A673 (cell line): ENCODE measurements at regions of chr19 and their contacts with region 1.

Region 1: DNA sequence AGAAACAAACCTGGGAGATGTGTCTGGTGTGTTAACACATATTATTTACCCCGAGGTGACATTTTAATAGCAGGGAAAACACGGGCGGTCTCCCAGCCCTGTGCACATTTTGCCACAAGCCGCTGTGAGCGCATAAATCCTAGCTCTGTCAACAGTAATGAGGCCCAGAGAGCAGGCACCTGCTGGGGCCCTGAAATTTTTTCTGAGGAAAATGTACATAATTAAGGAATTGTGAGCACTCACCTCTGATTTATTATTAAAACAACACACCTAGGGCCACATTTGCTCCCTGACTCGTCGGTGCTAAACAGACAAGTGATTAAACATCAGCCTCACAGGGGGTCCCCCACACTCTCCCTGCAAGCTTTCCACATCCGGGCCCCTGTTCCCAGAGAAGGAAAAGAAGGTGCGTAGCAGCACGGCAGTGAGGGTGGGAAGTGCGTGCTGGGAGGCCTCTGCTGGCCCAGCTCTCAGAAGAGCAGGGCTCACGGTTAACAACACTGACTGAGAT is 616.3 kb downstream of the UQCRFS1 start:
- DNase-seq: no peak
- H3K4me3 ChIP-seq: no peak overlapping the region
- H3K27ac ChIP-seq: no peak overlapping the region
- H3K4me1 ChIP-seq: no peaks in the 10 kb centered on the region
- H3K27me3 ChIP-seq: no peaks in the 10 kb centered on the region
- CTCF ChIP-seq: no peak

Region 2: DNA sequence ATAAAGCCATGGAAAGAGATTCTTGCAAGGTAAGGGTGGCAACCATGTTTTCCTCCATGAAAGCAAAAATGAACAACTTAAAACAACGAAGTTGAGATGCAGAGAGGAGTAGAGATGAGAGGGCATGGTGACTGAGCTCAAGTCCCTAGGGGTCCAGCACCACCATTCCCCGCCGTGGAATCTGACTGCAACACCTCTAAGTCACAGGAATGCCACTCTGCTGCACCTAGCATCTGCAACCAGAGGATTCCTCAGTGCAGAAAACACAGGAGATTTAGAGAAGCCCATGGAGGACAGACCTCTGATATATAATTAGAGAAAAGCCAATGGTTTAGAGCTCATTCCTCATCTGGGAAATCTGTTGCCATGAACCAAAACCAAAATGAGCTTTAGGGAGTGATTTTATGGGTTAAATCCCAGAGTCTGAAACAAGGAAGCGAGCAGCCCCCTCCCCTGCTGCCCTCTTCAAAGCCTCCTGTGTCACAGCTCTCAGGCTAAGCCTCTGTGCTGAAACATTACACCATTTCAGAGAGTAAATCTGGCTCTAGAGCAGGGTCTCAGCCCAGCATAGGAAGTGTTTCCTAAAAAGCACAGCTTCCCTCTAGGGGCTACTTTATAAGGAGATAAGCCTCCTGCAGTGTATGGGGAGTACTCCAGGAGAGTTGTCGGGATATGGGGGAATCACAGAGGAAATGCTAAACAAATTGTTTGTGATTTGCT is 427.3 kb before region 1 on chr19:
- CTCF ChIA-PET with region 1: no interaction called
- POLR2A ChIA-PET with region 1: interaction called, 19 read pairs
- intact Hi-C with region 1: no loop called
- DNase-seq: no peak
- H3K4me3 ChIP-seq: no peak overlapping the region
- H3K27ac ChIP-seq: no peak overlapping the region
- H3K4me1 ChIP-seq: no peaks in the 10 kb centered on the region
- H3K27me3 ChIP-seq: no peaks in the 10 kb centered on the region
- CTCF ChIP-seq: no peak

Region 3: DNA sequence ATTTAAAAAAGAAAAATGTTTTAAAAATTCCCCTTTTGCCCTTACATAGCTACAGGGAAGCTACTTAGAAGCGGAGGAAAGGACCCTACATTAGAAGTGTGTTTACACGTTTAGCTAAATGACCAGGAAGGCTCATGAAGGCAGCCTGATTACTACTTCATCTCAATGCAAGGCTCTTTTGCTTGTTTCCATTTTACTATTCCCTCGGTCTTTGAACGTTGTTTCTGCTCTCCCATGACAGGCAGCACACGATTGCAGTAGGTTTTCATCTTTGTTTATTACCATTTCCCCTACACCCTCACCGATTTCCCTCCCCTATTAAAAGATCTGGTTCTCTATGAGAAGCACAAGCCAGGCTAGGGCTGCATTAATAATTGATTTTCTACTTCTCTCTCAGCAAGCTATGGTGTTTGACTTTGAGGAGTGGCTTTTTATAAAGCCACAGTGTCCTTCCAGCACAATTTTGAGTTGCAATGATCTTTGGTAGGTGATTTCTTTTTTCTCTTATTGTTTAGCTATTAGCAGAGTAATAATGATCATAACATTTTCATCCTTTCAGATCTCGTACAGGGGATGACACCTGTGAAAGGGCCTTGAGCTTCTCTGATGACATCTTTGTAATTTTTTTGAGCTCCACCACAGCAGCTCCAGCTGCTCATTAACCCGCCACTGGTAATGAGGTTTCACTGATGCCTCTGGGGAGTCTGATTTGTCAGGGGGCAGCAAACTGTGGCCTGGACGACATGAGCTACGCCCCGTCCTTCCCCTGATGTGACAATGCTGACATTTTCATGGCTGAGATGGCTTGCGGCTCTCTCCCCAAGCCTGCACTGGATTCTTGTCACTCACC is 54.0 kb before region 1 on chr19:
- CTCF ChIA-PET with region 1: no interaction called
- POLR2A ChIA-PET with region 1: no interaction called
- intact Hi-C with region 1: no loop called
- DNase-seq: no peak
- H3K4me3 ChIP-seq: no peak overlapping the region
- H3K27ac ChIP-seq: no peak overlapping the region
- H3K4me1 ChIP-seq: no peaks in the 10 kb centered on the region
- H3K27me3 ChIP-seq: no peaks in the 10 kb centered on the region
- CTCF ChIP-seq: no peak

Region 4: DNA sequence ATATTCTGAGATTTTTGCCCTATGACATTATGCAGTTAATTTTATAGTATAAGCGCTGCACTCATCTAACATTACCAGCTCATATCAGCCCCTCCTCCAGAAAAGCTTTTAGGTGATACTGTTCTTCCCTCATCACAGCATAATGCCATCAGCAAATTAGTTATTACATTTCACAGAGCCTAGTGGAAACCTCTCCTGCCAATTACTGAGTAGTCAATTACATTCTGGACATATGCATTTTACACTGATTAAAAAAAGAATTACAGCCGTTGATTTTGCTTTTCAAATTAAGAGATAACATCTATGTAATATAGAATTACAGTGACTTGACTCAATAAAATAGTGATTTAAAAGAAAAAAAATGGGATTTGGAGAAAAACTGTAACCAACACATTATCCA is 74.2 kb after region 1 on chr19:
- CTCF ChIA-PET with region 1: no interaction called
- POLR2A ChIA-PET with region 1: no interaction called
- intact Hi-C with region 1: no loop called
- DNase-seq: no peak
- H3K4me3 ChIP-seq: no peak overlapping the region
- H3K27ac ChIP-seq: no peak overlapping the region
- H3K4me1 ChIP-seq: no peaks in the 10 kb centered on the region
- H3K27me3 ChIP-seq: no peaks in the 10 kb centered on the region
- CTCF ChIP-seq: no peak